Spleen (tissue), 13 donors: ENCODE measurements at regions of chr4 and their contacts with region 1.

Region 1: DNA sequence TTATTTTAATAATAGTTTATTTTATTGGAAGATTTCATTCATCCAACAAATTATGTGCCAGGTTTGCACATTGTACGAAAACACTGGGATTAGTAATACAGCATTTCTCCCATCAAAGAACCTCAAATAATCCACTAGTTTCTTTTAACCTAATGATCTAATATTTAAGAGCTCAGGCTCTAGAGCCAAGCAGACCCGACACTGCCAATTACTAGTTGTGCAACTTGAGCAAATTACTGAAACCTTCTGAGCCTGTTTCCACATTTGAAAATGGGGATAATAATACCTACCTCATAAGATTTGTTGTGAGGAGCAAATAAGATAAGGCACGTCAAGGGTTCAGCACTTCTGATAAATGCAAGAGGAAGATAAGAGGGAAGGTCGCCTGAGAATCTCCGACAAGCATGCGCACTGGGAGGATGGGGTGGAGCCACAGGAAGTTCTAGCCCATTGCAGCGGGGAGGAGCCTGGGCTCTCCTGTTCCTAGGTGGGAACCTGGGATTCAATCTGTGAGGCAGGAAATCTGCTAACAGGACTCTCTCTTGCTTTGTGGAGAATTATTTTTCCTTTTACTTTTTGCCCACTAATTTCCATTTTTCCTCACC is 141.5 kb upstream of the SMAD1 start:
- DNase-seq: no peak
- H3K4me3 ChIP-seq: no peak overlapping the region
- H3K27ac ChIP-seq: no peak overlapping the region
- H3K4me1 ChIP-seq: no peaks in the 10 kb centered on the region
- H3K27me3 ChIP-seq: no peaks in the 10 kb centered on the region
- CTCF ChIP-seq: no peak
- POLR2A ChIP-seq: no peak

Region 2: GRCh38 chr4:145148980-145149379 is 191.2 kb before region 1 on chr4:
- intact Hi-C with region 1: no loop called
- DNase-seq: no peak
- H3K4me3 ChIP-seq: no peak overlapping the region
- H3K27ac ChIP-seq: no peak overlapping the region
- H3K4me1 ChIP-seq: peaks cover 0 to 10% (median 0%) of the 10 kb centered on the region in 6 donors
- H3K27me3 ChIP-seq: no peaks in the 10 kb centered on the region
- CTCF ChIP-seq: no peak
- POLR2A ChIP-seq: no peak

Region 3: DNA sequence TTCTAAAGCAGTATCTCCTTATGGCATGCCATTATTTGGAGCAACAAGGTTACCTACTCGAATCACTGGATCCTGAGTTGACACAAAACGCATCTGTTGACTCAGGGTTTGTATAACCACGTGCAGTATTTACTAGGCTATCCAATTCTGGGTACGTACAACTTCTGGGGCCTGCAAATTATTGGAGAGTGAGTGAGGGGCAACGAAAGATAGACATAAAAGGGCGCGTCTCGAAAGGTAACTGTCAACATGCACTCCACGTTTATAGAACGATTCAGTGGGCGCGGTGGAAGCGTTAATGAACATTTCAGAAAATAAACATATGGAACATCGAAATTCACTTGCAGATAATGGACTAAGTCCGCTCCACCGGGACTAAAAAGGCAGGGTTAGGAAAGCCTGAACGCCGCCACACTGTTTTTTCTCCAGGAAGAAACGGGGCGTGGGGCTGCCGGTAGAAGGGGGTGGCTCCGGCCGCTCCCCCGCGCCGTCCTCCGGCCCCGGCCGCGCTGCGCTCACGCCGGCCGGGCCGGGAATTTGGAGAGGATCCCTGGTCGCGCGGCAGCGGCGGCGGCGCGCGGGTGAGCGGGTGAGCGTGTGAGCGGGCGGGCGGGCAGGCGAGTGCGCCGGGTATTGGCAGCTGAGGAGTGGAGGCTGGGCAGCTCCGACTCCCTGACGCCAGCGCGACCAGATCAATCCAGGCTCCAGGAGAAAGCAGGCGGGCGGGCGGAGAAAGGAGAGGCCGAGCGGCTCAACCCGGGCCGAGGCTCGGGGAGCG is 141.2 kb after region 1 on chr4 and contains the start of gene SMAD1:
- intact Hi-C with region 1: loop called (anchors 5 kb)
- DNase-seq: peak; percentile 87
- H3K4me3 ChIP-seq: peak within 1 kb of the TSS; percentile 61 to 87 (median 82)
- H3K27ac ChIP-seq: peak within 1 kb of the TSS; percentile 80 to 96 (median 94)
- H3K4me1 ChIP-seq: peaks cover 0 to 69% (median 33%) of the 10 kb centered on the region in 6 donors
- H3K27me3 ChIP-seq: peaks cover 0 to 82% (median 12%) of the 10 kb centered on the region in 7 donors
- CTCF ChIP-seq: no peak
- POLR2A ChIP-seq: no peak
- total RNA-seq, gene SMAD1: 20.4 to 48.2 (median 32.0) TPM